CD4-positive, alpha-beta T cell (primary cell): ENCODE measurements at regions of chr9 and their contacts with region 1.

Region 1: GRCh38 chr9:127450830-127451724 is at the starts of genes LRSAM1 and RPL12:
- DNase-seq: peak; percentile 97 to 100 (median 99)
- ATAC-seq: peak; percentile 84
- H3K4me3 ChIP-seq: peak within 1 kb of the TSS; percentile 89
- H3K4me3 Mint-ChIP-seq: peak within 1 kb of the TSS; percentile 99
- H3K27ac ChIP-seq: peak within 1 kb of the TSS; percentile 74 to 92
- H3K27ac Mint-ChIP-seq: peak within 1 kb of the TSS; percentile 99
- H3K4me1 ChIP-seq: peaks cover 41% of the 10 kb centered on the region
- H3K4me1 Mint-ChIP-seq: peaks cover 40% of the 10 kb centered on the region
- H3K27me3 ChIP-seq: no peaks in the 10 kb centered on the region
- H3K27me3 Mint-ChIP-seq: no peaks in the 10 kb centered on the region
- CTCF ChIP-seq: no peak
- total RNA-seq, gene LRSAM1: 11.4 to 16.0 TPM
- total RNA-seq, gene RPL12: 1,884 to 1,993 TPM

Region 2: DNA sequence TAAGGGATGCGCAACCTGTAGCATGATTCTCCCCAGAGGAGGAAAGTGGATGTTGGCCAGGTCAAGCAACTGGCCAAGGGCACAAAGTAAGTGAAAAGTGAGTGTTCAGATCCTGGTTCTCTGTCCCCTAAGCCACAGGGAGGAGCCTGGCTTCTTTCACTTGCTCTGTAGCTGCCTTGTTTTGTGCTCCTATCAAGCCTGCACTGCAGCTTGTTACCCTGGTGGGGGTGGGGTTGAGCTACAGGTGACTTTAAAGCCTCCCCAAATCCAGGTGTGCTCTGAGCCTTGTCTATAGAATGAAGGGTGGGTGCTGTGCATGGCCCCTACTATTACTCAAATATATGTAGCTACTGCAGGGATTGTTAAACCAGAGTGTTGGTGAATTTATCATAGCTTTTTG is 503.5 kb before region 1 on chr9:
- CTCF ChIA-PET with region 1: no interaction called
- POLR2A ChIA-PET with region 1: no interaction called
- intact Hi-C with region 1: loop called in 1 of 2 experiments (anchors 10 kb)
- DNase-seq: peak in 3 of 14 experiments; percentile 15 to 27 (median 25)
- ATAC-seq: peak; percentile 32
- H3K4me3 ChIP-seq: no peak overlapping the region
- H3K4me3 Mint-ChIP-seq: no peak overlapping the region
- H3K27ac ChIP-seq: no peak overlapping the region
- H3K27ac Mint-ChIP-seq: no peak overlapping the region
- H3K4me1 ChIP-seq: no peaks in the 10 kb centered on the region
- H3K4me1 Mint-ChIP-seq: no peaks in the 10 kb centered on the region
- H3K27me3 ChIP-seq: peaks cover 0 to 3% of the 10 kb centered on the region in 2 experiments
- H3K27me3 Mint-ChIP-seq: peaks cover 18% of the 10 kb centered on the region
- CTCF ChIP-seq: no peak

Region 3: GRCh38 chr9:127035951-127036350 is 415.1 kb before region 1 on chr9:
- CTCF ChIA-PET with region 1: no interaction called
- POLR2A ChIA-PET with region 1: no interaction called
- intact Hi-C with region 1: no loop called
- DNase-seq: no peak
- ATAC-seq: no peak
- H3K4me3 ChIP-seq: no peak overlapping the region
- H3K4me3 Mint-ChIP-seq: no peak overlapping the region
- H3K27ac ChIP-seq: no peak overlapping the region
- H3K27ac Mint-ChIP-seq: no peak overlapping the region
- H3K4me1 ChIP-seq: no peaks in the 10 kb centered on the region
- H3K4me1 Mint-ChIP-seq: no peaks in the 10 kb centered on the region
- H3K27me3 ChIP-seq: no peaks in the 10 kb centered on the region
- H3K27me3 Mint-ChIP-seq: no peaks in the 10 kb centered on the region
- CTCF ChIP-seq: no peak

Region 4: GRCh38 chr9:127224178-127224882 is 226.7 kb before region 1 on chr9:
- CTCF ChIA-PET with region 1: no interaction called
- POLR2A ChIA-PET with region 1: interaction called, 26 read pairs
- intact Hi-C with region 1: loop called in 1 of 2 experiments (anchors 10 kb)
- DNase-seq: peak; percentile 74 to 93 (median 86)
- ATAC-seq: peak; percentile 77
- H3K4me3 ChIP-seq: peak overlapping the region; percentile 67
- H3K4me3 Mint-ChIP-seq: peak overlapping the region; percentile 89
- H3K27ac ChIP-seq: no peak overlapping the region
- H3K27ac Mint-ChIP-seq: peak overlapping the region; percentile 90
- H3K4me1 ChIP-seq: peaks cover 35% of the 10 kb centered on the region
- H3K4me1 Mint-ChIP-seq: peaks cover 41% of the 10 kb centered on the region
- H3K27me3 ChIP-seq: no peaks in the 10 kb centered on the region
- H3K27me3 Mint-ChIP-seq: peaks cover 28% of the 10 kb centered on the region
- CTCF ChIP-seq: no peak

Region 5: DNA sequence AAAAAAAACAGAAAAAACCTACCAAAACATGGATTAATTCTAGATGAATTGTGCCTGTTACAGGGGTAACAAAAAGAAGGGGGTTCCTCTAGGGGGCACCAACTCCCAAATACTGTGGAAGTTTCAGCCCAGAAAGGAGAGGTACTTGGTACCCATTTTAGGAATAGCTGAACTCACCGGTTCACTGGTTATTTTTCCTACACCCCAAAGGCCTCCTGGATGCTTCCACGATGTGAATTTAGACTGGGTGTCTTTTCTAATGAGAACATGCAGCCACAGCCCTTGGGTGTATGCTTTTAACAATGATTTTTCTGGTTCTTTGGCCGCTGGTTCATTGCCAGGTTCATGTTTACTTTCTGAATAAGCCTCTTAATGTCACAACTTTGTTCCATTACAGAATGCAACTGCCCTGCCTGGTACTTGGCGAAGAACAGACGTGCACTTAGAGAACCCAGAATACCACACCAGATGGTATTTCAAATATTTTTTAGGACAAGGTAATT is 139.8 kb before region 1 on chr9:
- CTCF ChIA-PET with region 1: no interaction called
- POLR2A ChIA-PET with region 1: interaction called, 4 read pairs
- intact Hi-C with region 1: loop called in 1 of 2 experiments (anchors 5 kb)
- DNase-seq: peak in 8 of 14 experiments; percentile 3 to 55 (median 31)
- ATAC-seq: no peak
- H3K4me3 ChIP-seq: no peak overlapping the region
- H3K4me3 Mint-ChIP-seq: no peak overlapping the region
- H3K27ac ChIP-seq: no peak overlapping the region
- H3K27ac Mint-ChIP-seq: no peak overlapping the region
- H3K4me1 ChIP-seq: no peaks in the 10 kb centered on the region
- H3K4me1 Mint-ChIP-seq: no peaks in the 10 kb centered on the region
- H3K27me3 ChIP-seq: no peaks in the 10 kb centered on the region
- H3K27me3 Mint-ChIP-seq: peaks cover 38% of the 10 kb centered on the region
- CTCF ChIP-seq: peak; percentile 34

Region 6: DNA sequence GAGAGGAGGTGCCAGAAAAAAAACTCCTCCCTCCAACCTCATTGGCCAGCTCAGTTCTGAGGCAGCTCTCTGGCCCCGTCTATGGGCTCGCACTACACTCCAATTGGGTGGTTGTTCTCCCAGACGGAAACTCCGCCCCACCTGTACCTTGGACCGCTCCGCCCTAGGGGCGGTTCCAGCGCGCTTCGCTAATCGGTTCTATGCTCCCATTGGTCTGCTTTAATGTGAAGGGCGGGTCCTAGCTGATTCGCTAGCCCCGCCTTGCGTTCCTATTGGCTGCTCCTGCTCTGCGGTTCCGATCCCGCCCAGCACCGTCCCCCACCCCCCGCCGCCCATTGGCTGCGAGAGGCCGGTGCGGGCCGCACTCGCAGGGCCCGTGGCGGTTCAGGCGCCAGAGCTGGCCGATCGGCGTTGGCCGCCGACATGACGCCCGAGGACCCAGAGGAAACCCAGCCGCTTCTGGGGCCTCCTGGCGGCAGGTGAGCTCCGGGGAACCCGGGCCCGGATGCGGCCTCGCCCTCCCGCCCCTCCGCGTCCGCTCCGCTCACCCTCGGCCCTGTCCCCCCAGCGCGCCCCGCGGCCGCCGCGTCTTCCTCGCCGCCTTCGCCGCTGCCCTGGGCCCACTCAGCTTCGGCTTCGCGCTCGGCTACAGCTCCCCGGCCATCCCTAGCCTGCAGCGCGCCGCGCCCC is 54.1 kb before region 1 on chr9 and contains the start of gene SLC2A8:
- CTCF ChIA-PET with region 1: interaction called, 5 read pairs
- POLR2A ChIA-PET with region 1: interaction called, 13 read pairs
- intact Hi-C with region 1: no loop called
- DNase-seq: peak; percentile 63 to 98 (median 76)
- ATAC-seq: peak; percentile 92
- H3K4me3 ChIP-seq: peak within 1 kb of the TSS; percentile 44
- H3K4me3 Mint-ChIP-seq: peak within 1 kb of the TSS; percentile 75
- H3K27ac ChIP-seq: no peak within 1 kb of the TSS
- H3K27ac Mint-ChIP-seq: no peak within 1 kb of the TSS
- H3K4me1 ChIP-seq: peaks cover 28% of the 10 kb centered on the region
- H3K4me1 Mint-ChIP-seq: peaks cover 21% of the 10 kb centered on the region
- H3K27me3 ChIP-seq: peaks cover 66 to 83% of the 10 kb centered on the region in 2 experiments
- H3K27me3 Mint-ChIP-seq: peaks cover 87% of the 10 kb centered on the region
- CTCF ChIP-seq: peak; percentile 18
- total RNA-seq, gene SLC2A8: 1.6 to 1.8 TPM

Region 7: GRCh38 chr9:127411122-127411521 is 40.0 kb before region 1 on chr9:
- CTCF ChIA-PET with region 1: no interaction called
- POLR2A ChIA-PET with region 1: no interaction called
- intact Hi-C with region 1: no loop called
- DNase-seq: no peak
- ATAC-seq: no peak
- H3K4me3 ChIP-seq: no peak overlapping the region
- H3K4me3 Mint-ChIP-seq: no peak overlapping the region
- H3K27ac ChIP-seq: no peak overlapping the region
- H3K27ac Mint-ChIP-seq: no peak overlapping the region
- H3K4me1 ChIP-seq: no peaks in the 10 kb centered on the region
- H3K4me1 Mint-ChIP-seq: no peaks in the 10 kb centered on the region
- H3K27me3 ChIP-seq: peaks cover 12 to 38% of the 10 kb centered on the region in 2 experiments
- H3K27me3 Mint-ChIP-seq: peaks cover 76% of the 10 kb centered on the region
- CTCF ChIP-seq: no peak